ENCODE measurements at regions of chr22 and their contacts with region 1.

Region 1: DNA sequence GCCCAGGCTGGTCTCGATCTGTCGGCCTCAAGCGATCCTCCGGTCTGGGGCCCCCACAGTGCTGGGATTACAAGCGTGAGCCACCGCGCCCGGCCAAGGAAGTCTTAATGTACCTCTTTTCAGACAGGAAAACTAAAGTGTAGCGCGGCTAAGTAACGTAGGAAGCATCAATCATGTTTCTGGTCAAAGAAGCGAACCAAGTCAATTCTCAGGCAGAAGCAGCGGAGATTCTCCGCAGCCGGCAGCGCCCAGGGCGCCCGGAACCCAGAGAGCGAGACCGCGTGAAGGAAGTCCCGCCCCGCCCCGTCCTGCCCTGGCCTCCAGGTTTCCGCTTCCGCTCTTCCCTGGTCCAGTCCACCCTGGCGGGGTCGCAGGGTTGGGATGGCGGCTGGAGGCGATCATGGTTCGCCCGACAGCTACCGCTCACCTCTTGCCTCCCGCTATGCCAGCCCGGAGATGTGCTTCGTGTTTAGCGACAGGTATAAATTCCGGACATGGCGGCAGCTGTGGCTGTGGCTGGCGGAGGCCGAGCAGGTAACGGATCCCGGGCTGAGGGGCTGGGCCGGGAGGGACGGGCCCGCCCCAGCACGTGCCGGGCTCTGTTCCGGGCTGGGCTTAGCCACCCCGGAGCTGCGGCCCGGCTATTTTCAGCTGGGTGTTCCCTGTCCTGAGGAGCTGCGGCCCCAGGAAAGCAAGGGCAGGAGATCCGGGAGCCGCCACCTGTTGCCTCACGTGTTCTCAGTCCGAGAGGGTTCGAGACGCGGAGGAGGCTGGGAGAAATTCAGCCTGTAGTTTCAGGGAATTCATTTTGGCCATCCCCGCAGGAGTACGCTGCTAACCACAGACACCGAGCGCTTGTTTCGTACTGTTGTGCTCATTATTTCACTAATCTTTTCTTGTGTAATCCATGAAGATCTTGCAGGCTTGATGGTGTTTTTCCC is at the start of gene ADSL:
- DNase-seq: peak; percentile 81 to 86 (median 84)
- H3K4me3 ChIP-seq: peak within 1 kb of the TSS; percentile 91 to 95
- H3K4me3 Mint-ChIP-seq: peak within 1 kb of the TSS; percentile 92 to 99 (median 98)
- H3K27ac ChIP-seq: peak within 1 kb of the TSS; percentile 81
- H3K27ac Mint-ChIP-seq: peak within 1 kb of the TSS; percentile 92 to 99 (median 98)
- H3K4me1 ChIP-seq: peaks cover 63% of the 10 kb centered on the region
- H3K4me1 Mint-ChIP-seq: peaks cover 37 to 70% (median 51%) of the 10 kb centered on the region in 4 donors
- H3K27me3 ChIP-seq: no peaks in the 10 kb centered on the region
- H3K27me3 Mint-ChIP-seq: no peaks in the 10 kb centered on the region
- total RNA-seq, gene ADSL: 63.3 to 81.1 TPM

Region 2: DNA sequence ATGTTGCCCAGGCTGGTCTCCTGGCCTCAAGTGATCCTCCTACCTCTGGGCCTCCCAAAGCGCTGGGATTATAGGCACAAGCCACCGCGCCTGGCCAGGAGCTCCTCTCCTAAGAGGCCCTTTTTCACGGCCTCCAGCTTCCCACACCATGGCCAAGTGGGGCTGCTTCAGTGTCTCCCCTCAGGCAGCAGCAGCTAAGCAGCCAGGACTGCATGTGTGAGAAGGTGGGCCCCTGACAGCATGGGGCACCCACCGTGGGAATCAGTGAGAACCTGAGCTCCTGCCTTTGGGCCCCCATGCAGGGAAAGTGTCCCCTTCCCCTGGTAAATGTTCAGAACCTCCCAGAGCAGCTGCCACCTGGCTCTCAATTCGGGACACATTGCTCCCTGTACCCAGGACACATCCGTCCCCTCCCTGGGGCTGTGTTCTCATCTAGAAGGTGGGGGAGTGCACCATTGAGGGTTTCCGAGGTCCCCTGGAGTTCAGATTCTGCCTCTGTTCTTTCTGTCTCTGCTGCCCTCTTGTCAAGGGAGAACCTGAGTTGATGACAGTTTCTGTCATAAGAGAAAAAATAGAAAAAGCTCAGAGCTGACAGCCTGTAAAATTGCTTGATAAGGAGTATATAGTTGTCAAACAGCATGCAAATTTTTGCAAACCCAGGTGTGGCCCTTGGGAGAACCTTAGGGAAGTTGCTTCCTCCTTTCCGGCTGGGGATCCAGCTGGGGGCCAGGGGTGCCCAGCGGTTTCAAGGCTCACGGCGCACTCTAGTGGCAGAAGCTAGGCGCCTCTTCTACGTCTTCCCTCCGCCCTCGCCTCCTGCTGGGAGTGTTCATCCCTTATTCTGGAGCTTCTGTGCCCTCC is 322.0 kb before region 1 on chr22:
- CTCF ChIA-PET with region 1: interaction called, 18 read pairs
- POLR2A ChIA-PET with region 1: interaction called, 4 read pairs
- intact Hi-C with region 1: loop called (anchors 1 kb)
- DNase-seq: peak in 4 of 5 donors; percentile 41 to 48 (median 47)
- H3K4me3 ChIP-seq: no peak overlapping the region
- H3K4me3 Mint-ChIP-seq: no peak overlapping the region
- H3K27ac ChIP-seq: no peak overlapping the region
- H3K27ac Mint-ChIP-seq: no peak overlapping the region
- H3K4me1 ChIP-seq: no peaks in the 10 kb centered on the region
- H3K4me1 Mint-ChIP-seq: peaks cover 0 to 2% (median 0%) of the 10 kb centered on the region in 4 donors
- H3K27me3 ChIP-seq: no peaks in the 10 kb centered on the region
- H3K27me3 Mint-ChIP-seq: peaks cover 0 to 1% of the 10 kb centered on the region in 2 donors

Region 3: GRCh38 chr22:40055143-40055883 is 291.1 kb before region 1 on chr22:
- CTCF ChIA-PET with region 1: interaction called, 14 read pairs
- POLR2A ChIA-PET with region 1: interaction called, 14 read pairs
- intact Hi-C with region 1: loop called (anchors 2 kb)
- DNase-seq: peak; percentile 53 to 78 (median 63)
- H3K4me3 ChIP-seq: peak overlapping the region; percentile 30 to 33
- H3K4me3 Mint-ChIP-seq: peak overlapping the region; percentile 59 to 86 (median 77)
- H3K27ac ChIP-seq: peak overlapping the region; percentile 64
- H3K27ac Mint-ChIP-seq: peak overlapping the region; percentile 90 to 96 (median 93)
- H3K4me1 ChIP-seq: peaks cover 92% of the 10 kb centered on the region
- H3K4me1 Mint-ChIP-seq: peaks cover 65 to 91% (median 78%) of the 10 kb centered on the region in 4 donors
- H3K27me3 ChIP-seq: no peaks in the 10 kb centered on the region
- H3K27me3 Mint-ChIP-seq: no peaks in the 10 kb centered on the region

Region 4: GRCh38 chr22:40215266-40215665 is 131.2 kb before region 1 on chr22:
- CTCF ChIA-PET with region 1: interaction called, 8 read pairs
- POLR2A ChIA-PET with region 1: interaction called, 19 read pairs
- intact Hi-C with region 1: no loop called
- DNase-seq: no peak
- H3K4me3 ChIP-seq: no peak overlapping the region
- H3K4me3 Mint-ChIP-seq: peak overlapping the region in 7 of 8 donors; percentile 58 to 89 (median 81)
- H3K27ac ChIP-seq: peak overlapping the region; percentile 64
- H3K27ac Mint-ChIP-seq: peak overlapping the region; percentile 83 to 94 (median 94)
- H3K4me1 ChIP-seq: peaks cover 95% of the 10 kb centered on the region
- H3K4me1 Mint-ChIP-seq: peaks cover 76 to 94% (median 84%) of the 10 kb centered on the region in 4 donors
- H3K27me3 ChIP-seq: no peaks in the 10 kb centered on the region
- H3K27me3 Mint-ChIP-seq: no peaks in the 10 kb centered on the region

Region 5: DNA sequence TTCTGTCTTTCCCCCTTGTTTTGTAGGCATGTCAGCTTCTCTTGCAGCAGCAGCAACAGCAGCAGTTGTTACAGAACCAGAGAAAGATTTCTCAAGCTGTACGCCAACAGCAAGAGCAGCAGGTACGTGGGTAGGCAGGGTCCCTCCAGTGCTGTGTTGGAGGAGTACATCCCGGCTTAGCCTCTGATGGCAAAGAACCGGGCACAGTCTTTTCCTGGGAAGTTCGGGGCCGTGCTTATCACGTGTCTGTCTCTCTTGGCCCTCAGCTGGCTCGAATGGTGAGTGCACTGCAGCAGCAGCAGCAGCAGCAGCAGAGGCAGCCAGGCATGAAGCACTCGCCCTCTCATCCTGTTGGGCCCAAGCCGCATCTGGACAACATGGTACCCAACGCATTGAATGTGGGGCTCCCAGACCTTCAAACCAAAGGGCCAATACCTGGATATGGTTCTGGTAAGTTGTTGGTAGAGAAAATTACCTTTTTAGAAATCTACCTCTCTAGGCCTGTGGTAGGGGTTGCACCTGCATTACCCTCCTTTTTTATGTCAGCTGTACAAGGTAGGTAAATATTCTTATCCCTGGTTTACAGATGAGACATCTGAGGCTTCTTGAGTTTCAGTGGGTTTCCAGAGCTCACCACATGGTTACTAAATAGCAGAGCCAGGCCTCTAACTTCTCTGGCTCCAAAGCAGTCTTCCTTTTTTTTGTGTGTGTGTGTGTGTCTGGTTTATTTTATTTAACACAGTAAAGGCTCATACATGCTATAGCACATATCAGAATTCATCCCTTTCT is 45.4 kb before region 1 on chr22:
- CTCF ChIA-PET with region 1: interaction called, 11 read pairs
- POLR2A ChIA-PET with region 1: interaction called, 5 read pairs
- intact Hi-C with region 1: no loop called
- DNase-seq: no peak
- H3K4me3 ChIP-seq: no peak overlapping the region
- H3K4me3 Mint-ChIP-seq: no peak overlapping the region
- H3K27ac ChIP-seq: no peak overlapping the region
- H3K27ac Mint-ChIP-seq: peak overlapping the region in 1 of 7 donors; percentile 69
- H3K4me1 ChIP-seq: no peaks in the 10 kb centered on the region
- H3K4me1 Mint-ChIP-seq: peaks cover 5 to 17% (median 7%) of the 10 kb centered on the region in 4 donors
- H3K27me3 ChIP-seq: no peaks in the 10 kb centered on the region
- H3K27me3 Mint-ChIP-seq: no peaks in the 10 kb centered on the region

Region 6: DNA sequence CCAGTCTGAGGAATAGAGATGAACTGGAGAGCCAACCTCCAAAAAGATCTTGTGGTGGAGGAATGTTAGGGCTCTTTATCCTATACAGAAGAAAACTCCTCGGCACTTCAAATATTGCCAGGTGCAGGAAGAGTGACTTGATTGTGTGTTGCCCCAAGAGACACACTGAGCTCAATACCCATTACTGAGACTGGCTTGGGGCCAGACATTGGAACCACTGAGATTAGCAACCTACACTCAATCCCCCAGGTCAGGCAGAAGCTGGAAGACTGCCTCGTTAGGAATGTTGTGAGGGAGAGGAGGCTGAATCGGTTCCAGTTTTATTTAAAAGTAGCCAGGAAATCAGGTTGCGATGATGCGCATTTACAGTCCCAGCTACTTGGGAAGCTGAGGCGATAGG is 21.6 kb after region 1 on chr22:
- CTCF ChIA-PET with region 1: interaction called, 12 read pairs
- POLR2A ChIA-PET with region 1: interaction called, 4 read pairs
- intact Hi-C with region 1: no loop called
- DNase-seq: no peak
- H3K4me3 ChIP-seq: no peak overlapping the region
- H3K4me3 Mint-ChIP-seq: no peak overlapping the region
- H3K27ac ChIP-seq: no peak overlapping the region
- H3K27ac Mint-ChIP-seq: peak overlapping the region in 2 of 7 donors; percentile 66 to 75
- H3K4me1 ChIP-seq: peaks cover 21% of the 10 kb centered on the region
- H3K4me1 Mint-ChIP-seq: peaks cover 15 to 17% (median 17%) of the 10 kb centered on the region in 4 donors
- H3K27me3 ChIP-seq: no peaks in the 10 kb centered on the region
- H3K27me3 Mint-ChIP-seq: no peaks in the 10 kb centered on the region

Region 7: GRCh38 chr22:40392618-40393017 is 46.2 kb after region 1 on chr22:
- CTCF ChIA-PET with region 1: no interaction called
- POLR2A ChIA-PET with region 1: no interaction called
- intact Hi-C with region 1: no loop called
- DNase-seq: no peak
- H3K4me3 ChIP-seq: no peak overlapping the region
- H3K4me3 Mint-ChIP-seq: no peak overlapping the region
- H3K27ac ChIP-seq: no peak overlapping the region
- H3K27ac Mint-ChIP-seq: peak overlapping the region in 2 of 7 donors; percentile 70 to 72
- H3K4me1 ChIP-seq: peaks cover 24% of the 10 kb centered on the region
- H3K4me1 Mint-ChIP-seq: peaks cover 34 to 70% (median 54%) of the 10 kb centered on the region in 4 donors
- H3K27me3 ChIP-seq: no peaks in the 10 kb centered on the region
- H3K27me3 Mint-ChIP-seq: no peaks in the 10 kb centered on the region

Measured in CD4-positive, alpha-beta memory T cell (primary cell).